Head of caudate nucleus (tissue), 42 donors: ENCODE measurements at regions of chr1 and their contacts with region 1.

Region 1: GRCh38 chr1:235415008-235415904 is 48.0 kb downstream of the TBCE start:
- DNase-seq: peak in 41 of 42 donors; percentile 22 to 83 (median 54)

Region 2: GRCh38 chr1:235093696-235094592 is 321.3 kb before region 1 on chr1:
- intact Hi-C with region 1: loop called (anchors 10 kb)
- DNase-seq: peak; percentile 43 to 90 (median 82)

Region 3: GRCh38 chr1:235190431-235190830 is 224.8 kb before region 1 on chr1:
- intact Hi-C with region 1: no loop called
- DNase-seq: no peak

Region 4: DNA sequence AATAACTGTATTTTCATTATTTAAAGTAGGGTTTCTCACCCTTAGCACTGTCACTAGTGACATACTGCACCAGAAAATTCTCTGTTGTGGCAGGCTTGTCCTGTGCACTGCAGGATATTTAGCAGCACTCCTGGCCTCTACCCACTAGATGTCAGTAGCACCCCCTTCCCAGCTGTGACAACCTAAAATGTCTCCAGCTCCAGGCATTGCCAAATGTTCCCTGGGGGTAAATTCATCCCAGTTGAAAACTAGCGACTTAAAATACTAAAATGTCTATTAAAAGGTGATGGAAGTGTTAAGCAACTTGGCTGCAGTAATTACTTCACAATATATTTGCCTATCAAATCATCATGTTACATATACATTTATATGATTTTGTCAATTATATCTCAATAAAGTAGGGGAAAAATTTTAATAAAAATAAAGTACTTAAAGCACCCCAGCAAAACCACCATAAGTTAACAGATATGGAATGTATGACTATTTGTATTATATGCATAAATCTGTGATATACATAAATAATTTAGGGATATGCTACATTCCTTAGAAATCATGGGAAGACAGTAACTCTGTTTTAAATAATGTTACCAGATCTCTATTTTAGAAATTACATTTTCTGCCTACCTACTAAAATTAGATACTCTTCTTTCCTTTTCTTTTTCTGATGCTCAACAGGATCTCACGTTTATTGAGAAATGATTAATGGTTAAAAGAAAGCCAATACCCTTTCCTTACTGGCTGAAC is 161.9 kb before region 1 on chr1:
- intact Hi-C with region 1: loop called (anchors 2 kb)
- DNase-seq: peak in 41 of 42 donors; percentile 26 to 85 (median 66)

Region 5: DNA sequence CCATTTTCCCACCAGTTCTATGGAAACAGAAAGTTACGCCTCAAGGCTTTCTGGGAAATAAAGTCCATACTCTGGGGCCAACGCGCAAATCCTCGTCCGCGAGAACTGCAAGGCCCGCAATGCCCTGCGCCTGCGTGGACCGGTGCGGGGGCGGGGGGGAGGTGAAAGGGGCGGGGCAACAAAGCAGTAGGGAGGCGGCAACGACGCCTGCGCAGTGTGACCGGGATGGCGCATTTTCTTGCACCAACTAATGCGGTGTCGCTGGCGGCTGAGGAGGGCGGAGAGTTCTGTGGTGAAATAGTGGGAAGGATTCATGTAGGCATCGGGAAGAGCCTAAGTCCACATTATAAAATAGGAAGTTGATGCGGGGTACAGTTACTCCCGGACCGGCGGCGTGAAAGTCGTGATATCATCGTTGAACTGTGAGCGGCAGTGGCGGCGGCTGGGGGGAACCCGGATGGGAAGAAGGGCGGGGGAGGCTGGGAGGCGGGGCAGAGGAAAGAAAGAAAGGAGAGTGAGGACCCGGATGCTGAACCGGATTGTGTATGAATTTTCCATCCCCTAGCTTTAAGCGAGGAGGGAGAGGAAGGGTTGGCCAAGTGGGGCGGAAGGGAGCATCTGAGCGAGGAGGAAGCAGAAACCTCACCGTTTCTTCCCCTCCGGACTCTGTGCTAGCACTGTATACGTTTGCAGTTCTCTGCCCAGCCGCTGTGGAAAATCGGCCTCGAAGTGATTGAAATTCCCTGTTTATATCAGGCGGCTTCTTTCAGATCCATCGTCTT is 86.7 kb before region 1 on chr1 and contains the start of gene GGPS1:
- intact Hi-C with region 1: loop called (anchors 5 kb)
- DNase-seq: peak; percentile 95 to 99 (median 97)